A673 (cell line): ENCODE measurements at regions of chr11 and their contacts with region 1.

Region 1: DNA sequence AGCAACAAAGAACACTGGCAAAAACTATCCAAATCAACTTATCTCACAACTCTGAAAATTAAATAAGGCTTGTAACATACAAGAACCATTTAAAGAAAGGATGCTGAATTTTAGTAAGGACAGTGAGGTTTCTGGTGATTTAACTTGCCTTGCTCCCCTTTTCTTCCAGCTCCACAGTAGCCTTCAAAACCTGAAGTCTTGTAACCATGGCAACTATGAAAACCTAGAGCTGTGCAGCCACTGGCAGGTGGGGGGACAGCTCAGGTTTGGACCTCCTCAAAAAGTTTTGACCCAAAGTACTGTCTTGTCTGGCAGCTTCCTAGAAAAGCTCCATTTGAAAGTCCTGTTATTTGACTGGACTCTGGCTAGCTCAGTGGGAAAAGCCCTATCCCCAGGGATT is 60.0 kb downstream of the CKAP5 start:
- DNase-seq: no peak
- H3K4me3 ChIP-seq: no peak overlapping the region
- H3K27ac ChIP-seq: no peak overlapping the region
- H3K4me1 ChIP-seq: no peaks in the 10 kb centered on the region
- H3K27me3 ChIP-seq: no peaks in the 10 kb centered on the region
- CTCF ChIP-seq: no peak

Region 2: GRCh38 chr11:45017329-45017728 is 1768.8 kb before region 1 on chr11:
- CTCF ChIA-PET with region 1: no interaction called
- POLR2A ChIA-PET with region 1: no interaction called
- intact Hi-C with region 1: no loop called
- DNase-seq: no peak
- H3K4me3 ChIP-seq: no peak overlapping the region
- H3K27ac ChIP-seq: no peak overlapping the region
- H3K4me1 ChIP-seq: no peaks in the 10 kb centered on the region
- H3K27me3 ChIP-seq: no peaks in the 10 kb centered on the region
- CTCF ChIP-seq: peak; percentile 54

Region 3: GRCh38 chr11:46421257-46421880 is 364.7 kb before region 1 on chr11:
- CTCF ChIA-PET with region 1: no interaction called
- POLR2A ChIA-PET with region 1: no interaction called
- intact Hi-C with region 1: no loop called
- DNase-seq: no peak
- H3K4me3 ChIP-seq: no peak overlapping the region
- H3K27ac ChIP-seq: no peak overlapping the region
- H3K4me1 ChIP-seq: peaks cover 8% of the 10 kb centered on the region
- H3K27me3 ChIP-seq: no peaks in the 10 kb centered on the region
- CTCF ChIP-seq: no peak

Region 4: GRCh38 chr11:46750126-46750525 is 36.0 kb before region 1 on chr11:
- CTCF ChIA-PET with region 1: no interaction called
- POLR2A ChIA-PET with region 1: no interaction called
- intact Hi-C with region 1: loop called (anchors 5 kb)
- DNase-seq: no peak
- H3K4me3 ChIP-seq: no peak overlapping the region
- H3K27ac ChIP-seq: no peak overlapping the region
- H3K4me1 ChIP-seq: no peaks in the 10 kb centered on the region
- H3K27me3 ChIP-seq: no peaks in the 10 kb centered on the region
- CTCF ChIP-seq: no peak